Posterior vena cava (tissue), 2 donors: ENCODE measurements at regions of chr18 and their contacts with region 1.

Region 1: DNA sequence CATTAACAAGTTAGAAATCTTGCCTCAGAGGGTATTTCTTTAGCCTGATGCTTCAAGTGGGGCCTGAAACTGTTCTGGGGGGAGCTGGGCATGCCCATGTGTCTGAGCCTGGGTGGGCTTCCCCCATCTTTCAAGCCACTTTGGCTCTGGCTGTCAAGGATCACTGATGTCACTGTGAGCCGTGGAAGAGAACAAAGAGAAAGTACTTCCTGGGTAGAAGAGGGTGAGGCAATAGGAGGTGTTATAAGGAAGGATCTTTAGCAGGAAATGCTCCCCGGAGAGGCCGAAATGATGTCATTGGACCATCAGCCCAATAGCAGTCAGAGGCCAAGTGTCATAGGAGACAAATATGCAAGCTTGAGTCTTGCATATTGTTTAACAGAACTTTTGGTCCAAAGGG is 228.4 kb upstream of the MEX3C start:
- DNase-seq: no peak

Region 2: GRCh38 chr18:51447351-51448342 is 21.8 kb after region 1 on chr18:
- intact Hi-C with region 1: loop called in 1 of 2 experiments (anchors 1 kb)
- DNase-seq: no peak